ENCODE measurements at regions of chr5 and their contacts with region 1.

Region 1: GRCh38 chr5:115366223-115366622 is 69.8 kb upstream of the CCDC112 start:
- DNase-seq: peak; percentile 96
- H3K4me3 ChIP-seq: no peak overlapping the region
- H3K27ac ChIP-seq: peak overlapping the region; percentile 71
- H3K4me1 ChIP-seq: peaks cover 19% of the 10 kb centered on the region
- H3K27me3 ChIP-seq: no peaks in the 10 kb centered on the region
- CTCF ChIP-seq: peak in 1 of 2 donors; percentile 43
- POLR2A ChIP-seq: no peak

Region 2: GRCh38 chr5:115309751-115310370 is 56.4 kb before region 1 on chr5:
- CTCF ChIA-PET with region 1: interaction called, 3 read pairs
- POLR2A ChIA-PET with region 1: no interaction called
- dilution Hi-C with region 1: no loop called
- intact Hi-C with region 1: loop called (anchors 2 kb)
- DNase-seq: peak; percentile 69
- H3K4me3 ChIP-seq: no peak overlapping the region
- H3K27ac ChIP-seq: no peak overlapping the region
- H3K4me1 ChIP-seq: no peaks in the 10 kb centered on the region
- H3K27me3 ChIP-seq: no peaks in the 10 kb centered on the region
- CTCF ChIP-seq: peak in 1 of 2 donors; percentile 16
- POLR2A ChIP-seq: no peak

Region 3: DNA sequence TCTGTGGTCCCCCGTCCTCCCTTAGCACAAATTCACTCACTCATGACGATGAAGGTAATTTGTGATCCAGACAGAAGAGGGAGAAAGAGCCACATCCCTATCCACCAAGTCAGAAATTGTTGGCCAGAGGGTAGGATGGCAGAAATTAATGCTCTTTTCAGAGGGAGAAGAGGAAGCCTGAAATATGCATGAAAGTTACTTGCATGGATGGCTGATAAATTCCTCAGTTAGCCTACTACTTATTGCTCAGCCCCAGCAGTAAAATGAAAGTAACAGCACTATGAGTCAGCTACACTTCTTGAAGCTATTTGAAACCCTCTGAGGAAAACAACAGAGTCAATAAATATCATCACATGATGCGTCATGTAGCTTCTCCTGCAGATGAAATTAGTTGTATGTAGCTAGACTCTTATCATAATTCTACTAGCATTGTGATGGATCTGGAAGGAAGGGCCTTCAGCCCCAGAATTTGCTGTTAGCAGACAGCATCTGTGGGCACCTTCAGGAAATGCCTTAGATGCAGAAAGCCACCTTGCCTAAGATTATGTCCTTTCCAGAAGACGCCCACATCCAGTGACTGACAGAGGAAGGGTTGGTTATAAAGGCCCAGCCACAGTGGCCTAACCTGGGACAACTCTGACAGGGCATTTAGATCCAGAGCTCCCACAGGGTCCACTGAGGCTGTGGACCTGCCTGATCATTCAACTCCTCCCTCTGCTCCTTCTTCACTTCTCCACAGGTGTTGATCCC is 11.4 kb after region 1 on chr5:
- CTCF ChIA-PET with region 1: interaction called, 7 read pairs
- POLR2A ChIA-PET with region 1: interaction called, 4 read pairs
- dilution Hi-C with region 1: no loop called
- intact Hi-C with region 1: loop called (anchors 1 kb)
- DNase-seq: peak; percentile 51
- H3K4me3 ChIP-seq: no peak overlapping the region
- H3K27ac ChIP-seq: no peak overlapping the region
- H3K4me1 ChIP-seq: peaks cover 7% of the 10 kb centered on the region
- H3K27me3 ChIP-seq: no peaks in the 10 kb centered on the region
- CTCF ChIP-seq: no peak
- POLR2A ChIP-seq: no peak

Region 4: GRCh38 chr5:115460472-115460871 is 94.2 kb after region 1 on chr5:
- CTCF ChIA-PET with region 1: interaction called, 5 read pairs
- POLR2A ChIA-PET with region 1: no interaction called
- dilution Hi-C with region 1: no loop called
- intact Hi-C with region 1: loop called (anchors 1 kb)
- DNase-seq: peak; percentile 91
- H3K4me3 ChIP-seq: no peak overlapping the region
- H3K27ac ChIP-seq: peak overlapping the region; percentile 72
- H3K4me1 ChIP-seq: peaks cover 37% of the 10 kb centered on the region
- H3K27me3 ChIP-seq: no peaks in the 10 kb centered on the region
- CTCF ChIP-seq: no peak
- POLR2A ChIP-seq: no peak

Region 5: GRCh38 chr5:115579747-115580173 is 213.5 kb after region 1 on chr5:
- CTCF ChIA-PET with region 1: interaction called, 3 read pairs
- POLR2A ChIA-PET with region 1: no interaction called
- dilution Hi-C with region 1: no loop called
- intact Hi-C with region 1: loop called (anchors 1 kb)
- DNase-seq: no peak
- H3K4me3 ChIP-seq: no peak overlapping the region
- H3K27ac ChIP-seq: no peak overlapping the region
- H3K4me1 ChIP-seq: peaks cover 21% of the 10 kb centered on the region
- H3K27me3 ChIP-seq: no peaks in the 10 kb centered on the region
- CTCF ChIP-seq: no peak
- POLR2A ChIP-seq: no peak